GM10248 (cell line): ENCODE measurements at regions of chr2 and their contacts with region 1.

Region 1: GRCh38 chr2:230511571-230511970 is 95.6 kb downstream of the SP100 start:
- DNase-seq: no peak
- CTCF ChIP-seq: no peak

Region 2: DNA sequence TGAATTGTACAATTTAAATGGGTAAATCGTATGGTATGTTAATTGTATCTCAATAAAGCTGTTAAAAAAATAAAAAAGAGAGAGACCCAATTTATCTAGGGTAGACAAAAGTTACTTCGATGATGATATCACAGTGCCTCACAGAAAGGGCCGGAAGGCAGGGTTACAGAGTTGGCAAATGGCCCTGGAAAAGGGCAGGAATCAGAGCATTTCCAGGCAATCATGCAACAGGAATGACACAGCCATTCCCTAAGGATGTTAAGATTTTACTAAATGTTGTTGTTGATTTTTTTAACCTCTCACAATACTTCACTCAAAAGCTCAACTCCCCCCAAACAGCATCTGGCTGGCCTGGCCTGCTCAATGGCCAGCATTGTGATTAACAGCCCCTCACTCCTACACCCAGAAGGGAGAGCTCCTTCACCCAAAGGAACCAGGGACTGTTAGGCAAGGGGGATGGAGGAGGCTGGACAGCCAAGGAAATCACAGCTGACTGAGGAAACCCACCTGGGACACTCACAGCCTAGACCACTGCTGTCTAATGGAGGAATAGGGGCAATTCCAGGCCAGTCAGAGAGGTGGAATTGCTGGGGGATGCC is 103.2 kb before region 1 on chr2:
- CTCF ChIA-PET with region 1: no interaction called
- POLR2A ChIA-PET with region 1: no interaction called
- DNase-seq: no peak
- CTCF ChIP-seq: no peak

Region 3: DNA sequence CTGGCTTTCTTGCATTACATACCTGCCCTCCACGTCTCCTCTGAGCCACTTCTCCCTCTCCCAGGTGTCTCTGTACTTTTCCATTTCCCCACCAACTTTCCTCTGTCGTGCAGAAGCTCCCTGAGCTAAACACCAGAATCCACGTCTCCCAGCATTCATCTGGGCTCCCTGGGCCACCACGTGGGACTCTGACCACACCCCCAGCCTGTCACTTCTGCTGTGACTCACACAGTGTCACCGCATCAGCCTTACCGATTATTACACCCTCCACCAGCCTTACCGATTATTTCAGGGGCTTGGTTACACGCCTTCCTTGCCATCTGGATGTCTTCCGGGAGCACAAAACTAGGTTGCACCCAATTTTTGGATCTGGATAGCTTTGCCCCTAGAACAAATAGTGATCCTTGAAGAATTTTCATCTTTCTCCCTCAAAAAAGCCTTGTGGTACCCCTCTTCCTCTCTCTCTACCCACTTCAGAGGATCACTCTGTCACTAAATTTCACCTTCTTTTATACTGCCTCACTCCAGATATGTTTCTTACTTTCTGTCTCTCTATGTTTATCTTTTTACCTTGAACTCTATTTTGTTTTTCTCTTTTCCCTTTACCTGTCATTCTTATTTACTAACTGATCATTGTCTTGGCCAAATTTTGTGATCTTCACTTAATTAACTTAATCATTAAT is 64.2 kb after region 1 on chr2:
- CTCF ChIA-PET with region 1: no interaction called
- POLR2A ChIA-PET with region 1: no interaction called
- DNase-seq: no peak
- CTCF ChIP-seq: no peak

Region 4: GRCh38 chr2:231387904-231388724 is 876.5 kb after region 1 on chr2:
- CTCF ChIA-PET with region 1: no interaction called
- POLR2A ChIA-PET with region 1: interaction called, 12 read pairs
- DNase-seq: no peak
- CTCF ChIP-seq: no peak